A673 (cell line): ENCODE measurements at regions of chr3 and their contacts with region 1.

Region 1: GRCh38 chr3:101512646-101513418 is at the start of gene SENP7:
- DNase-seq: peak; percentile 90
- H3K4me3 ChIP-seq: peak within 1 kb of the TSS; percentile 73
- H3K27ac ChIP-seq: peak within 1 kb of the TSS; percentile 76
- H3K4me1 ChIP-seq: peaks cover 5% of the 10 kb centered on the region
- H3K27me3 ChIP-seq: no peaks in the 10 kb centered on the region
- CTCF ChIP-seq: no peak
- total RNA-seq, gene SENP7: 10.2 and 14.2 TPM in 2 replicates

Region 2: DNA sequence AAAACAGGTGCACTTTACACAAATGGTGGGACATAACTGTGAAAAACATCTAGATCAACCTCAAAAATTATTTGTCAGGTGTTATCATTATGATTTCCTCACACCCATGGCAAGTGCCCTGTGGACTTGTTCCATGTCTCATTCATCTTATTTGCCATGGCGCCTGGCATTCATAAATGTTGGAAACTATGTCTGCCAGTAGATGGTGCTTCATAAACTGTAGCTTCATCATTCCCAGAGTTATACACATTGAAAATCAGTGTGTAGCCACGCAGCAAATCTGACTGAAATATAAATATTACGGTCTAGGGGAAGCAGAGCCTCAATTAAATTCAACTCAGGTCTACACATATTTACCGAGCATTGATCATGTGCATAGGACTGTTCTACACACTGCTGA is 283.2 kb before region 1 on chr3:
- CTCF ChIA-PET with region 1: no interaction called
- POLR2A ChIA-PET with region 1: no interaction called
- intact Hi-C with region 1: loop called (anchors 10 kb)
- DNase-seq: peak; percentile 32
- H3K4me3 ChIP-seq: no peak overlapping the region
- H3K27ac ChIP-seq: no peak overlapping the region
- H3K4me1 ChIP-seq: no peaks in the 10 kb centered on the region
- H3K27me3 ChIP-seq: no peaks in the 10 kb centered on the region
- CTCF ChIP-seq: peak; percentile 52

Region 3: DNA sequence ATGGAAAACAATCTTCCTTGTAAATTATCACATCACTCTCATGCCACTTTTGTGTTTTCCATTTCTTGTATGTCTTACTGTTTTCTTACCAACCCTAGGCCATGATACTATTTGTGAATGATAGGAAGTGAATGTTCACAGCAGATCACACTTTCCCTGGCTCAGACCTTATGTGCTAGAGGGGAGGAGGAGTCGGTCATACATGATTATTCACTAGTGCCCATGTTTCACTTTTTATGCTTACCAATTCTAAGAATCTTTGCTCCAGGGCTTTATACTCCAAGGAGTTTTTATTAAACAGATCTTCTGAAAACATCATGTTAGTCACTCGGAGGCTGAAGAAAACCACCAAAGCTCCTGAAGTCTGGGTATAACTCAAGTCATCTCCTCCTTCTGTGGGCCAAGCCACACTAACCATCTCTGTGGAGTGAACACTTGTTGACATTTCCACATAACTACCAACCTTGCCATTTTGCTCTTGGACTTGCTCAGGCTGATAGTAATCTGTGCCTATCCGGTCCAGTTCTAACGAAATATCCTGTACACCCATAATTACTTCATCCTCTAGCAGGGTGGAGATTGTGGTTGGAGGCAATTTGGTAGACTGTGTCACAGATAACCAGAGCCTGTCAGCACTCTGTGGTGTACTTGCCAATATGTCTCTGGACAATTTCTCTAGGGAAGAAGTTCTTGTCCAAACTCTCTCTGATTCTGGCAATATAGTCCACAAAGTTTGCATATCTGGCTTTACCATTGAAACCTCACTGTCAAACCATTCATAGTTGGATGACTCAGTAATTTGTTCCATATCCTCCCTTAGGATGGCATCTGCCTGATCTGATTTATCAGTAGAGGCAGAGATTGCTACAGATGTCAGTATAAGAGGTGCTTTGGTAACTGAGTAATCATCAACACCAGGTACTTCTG is 269.3 kb before region 1 on chr3:
- CTCF ChIA-PET with region 1: no interaction called
- POLR2A ChIA-PET with region 1: interaction called, 13 read pairs
- intact Hi-C with region 1: no loop called
- DNase-seq: no peak
- H3K4me3 ChIP-seq: no peak overlapping the region
- H3K27ac ChIP-seq: no peak overlapping the region
- H3K4me1 ChIP-seq: no peaks in the 10 kb centered on the region
- H3K27me3 ChIP-seq: no peaks in the 10 kb centered on the region
- CTCF ChIP-seq: no peak

Region 4: GRCh38 chr3:102018551-102018950 is 505.7 kb after region 1 on chr3:
- CTCF ChIA-PET with region 1: no interaction called
- POLR2A ChIA-PET with region 1: no interaction called
- intact Hi-C with region 1: no loop called
- DNase-seq: no peak
- H3K4me3 ChIP-seq: no peak overlapping the region
- H3K27ac ChIP-seq: no peak overlapping the region
- H3K4me1 ChIP-seq: no peaks in the 10 kb centered on the region
- H3K27me3 ChIP-seq: no peaks in the 10 kb centered on the region
- CTCF ChIP-seq: no peak